ENCODE measurements at regions of chr15 and their contacts with region 1.

Region 1: DNA sequence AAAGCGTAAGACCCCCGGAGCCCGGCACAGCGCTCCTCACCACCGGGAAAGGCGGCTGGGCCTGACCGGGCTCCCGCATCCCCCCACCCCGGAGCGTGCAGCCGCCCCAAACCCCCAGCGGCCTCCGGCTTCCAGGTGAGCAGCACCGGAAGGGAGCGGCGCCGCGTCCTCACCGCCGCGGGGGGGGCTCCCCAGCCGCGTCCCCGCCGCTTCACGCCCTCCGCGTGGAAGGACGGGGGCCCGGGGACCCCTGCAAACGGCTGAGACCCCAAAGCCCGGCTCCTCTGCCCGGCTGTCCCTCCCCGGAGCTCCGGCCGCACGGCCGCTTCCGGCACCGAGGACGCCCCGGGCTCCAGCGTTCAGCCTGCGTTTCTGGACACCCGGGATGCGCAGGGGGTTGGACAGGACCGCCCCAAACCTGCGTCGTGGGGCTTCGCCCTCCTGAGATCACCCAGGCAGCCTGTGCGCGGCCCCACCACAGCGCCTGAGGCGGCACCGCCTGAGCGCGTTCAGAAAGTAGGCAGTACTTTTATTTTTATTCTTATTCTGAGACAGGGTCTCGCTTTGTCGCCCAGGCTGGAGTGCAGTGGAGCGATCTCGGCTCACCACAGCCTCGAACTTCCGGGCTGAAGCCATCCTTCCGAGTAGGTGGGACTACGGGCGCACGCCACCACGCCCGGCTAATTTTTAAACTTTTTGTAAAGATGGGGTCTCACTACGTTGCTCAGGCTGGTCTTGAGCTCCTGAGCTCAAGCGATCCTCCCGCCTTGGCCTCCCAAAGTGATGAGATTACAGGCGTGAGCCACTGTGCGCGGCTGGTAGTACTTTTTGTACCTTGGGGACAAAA is 51.6 kb upstream of the BLM start:
- DNase-seq: peak; percentile 85
- ATAC-seq: peak; percentile 80
- H3K4me3 Mint-ChIP-seq: peak overlapping the region; percentile 84
- H3K27ac Mint-ChIP-seq: peak overlapping the region; percentile 95
- H3K4me1 Mint-ChIP-seq: peaks cover 61% of the 10 kb centered on the region
- H3K27me3 Mint-ChIP-seq: peaks cover 5% of the 10 kb centered on the region

Region 2: DNA sequence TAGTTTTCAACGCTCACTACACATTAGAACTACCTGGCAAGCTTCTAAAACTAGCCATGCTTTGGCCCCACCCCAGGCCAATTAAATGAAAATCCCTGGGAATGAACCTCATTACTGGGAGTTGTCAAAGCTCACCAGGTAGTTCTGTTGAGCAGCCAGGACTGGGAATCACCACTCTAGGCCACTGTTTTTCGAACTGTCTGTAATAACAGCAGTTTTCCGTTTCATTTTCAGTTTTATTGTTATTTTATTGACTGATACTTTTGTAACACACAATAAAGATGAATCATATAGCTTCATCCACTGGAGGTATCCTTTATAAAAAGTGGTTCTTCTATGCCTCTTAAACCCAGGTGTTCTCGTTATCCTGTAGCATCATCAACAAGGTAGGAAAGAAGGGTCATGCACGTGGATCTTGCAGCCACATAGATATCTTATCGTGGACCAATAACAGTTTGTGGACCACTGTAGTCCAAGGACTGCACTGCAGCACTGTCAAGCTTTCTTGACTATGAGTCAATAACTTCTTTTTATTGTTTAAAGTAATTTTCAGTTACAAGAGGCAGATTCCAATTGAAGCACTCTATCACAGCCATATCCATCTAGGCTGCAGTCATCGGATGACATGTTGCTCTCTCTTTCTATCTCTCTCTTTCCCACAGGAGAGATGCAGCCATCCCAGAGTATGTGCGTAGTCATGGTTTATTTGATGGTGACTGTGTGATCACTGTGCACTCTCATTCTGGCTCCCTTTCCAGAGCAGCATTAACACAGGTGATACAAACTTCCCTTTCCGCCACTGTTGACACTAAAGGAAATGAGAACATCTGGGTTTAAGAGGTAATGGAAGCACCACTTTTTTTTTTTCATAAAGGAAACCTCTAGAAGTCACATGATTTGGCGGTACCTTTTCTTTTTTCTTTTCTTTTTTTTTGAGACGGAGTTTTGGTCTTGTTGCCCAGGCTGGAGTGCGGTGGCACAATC is 12.6 kb after region 1 on chr15:
- CTCF ChIA-PET with region 1: interaction called, 32 read pairs
- DNase-seq: no peak
- ATAC-seq: peak; percentile 75
- H3K4me3 Mint-ChIP-seq: peak overlapping the region; percentile 46
- H3K27ac Mint-ChIP-seq: peak overlapping the region; percentile 96
- H3K4me1 Mint-ChIP-seq: peaks cover 35% of the 10 kb centered on the region
- H3K27me3 Mint-ChIP-seq: no peaks in the 10 kb centered on the region